ENCODE measurements at regions of chr10 and their contacts with region 1.

Region 1: GRCh38 chr10:109978481-109978880 is 29.3 kb upstream of the ADD3 start:
- DNase-seq: peak; percentile 30 to 68 (median 51)
- ATAC-seq: peak; percentile 87
- H3K4me3 ChIP-seq: no peak overlapping the region
- H3K4me3 Mint-ChIP-seq: no peak overlapping the region
- H3K27ac ChIP-seq: no peak overlapping the region
- H3K27ac Mint-ChIP-seq: peak overlapping the region in 3 of 9 donors; percentile 25 to 44 (median 41)
- H3K4me1 ChIP-seq: no peaks in the 10 kb centered on the region
- H3K4me1 Mint-ChIP-seq: peaks cover 5 to 38% (median 19%) of the 10 kb centered on the region in 7 donors
- H3K27me3 ChIP-seq: no peaks in the 10 kb centered on the region
- H3K27me3 Mint-ChIP-seq: peaks cover 0 to 12% (median 0%) of the 10 kb centered on the region in 5 donors

Region 2: DNA sequence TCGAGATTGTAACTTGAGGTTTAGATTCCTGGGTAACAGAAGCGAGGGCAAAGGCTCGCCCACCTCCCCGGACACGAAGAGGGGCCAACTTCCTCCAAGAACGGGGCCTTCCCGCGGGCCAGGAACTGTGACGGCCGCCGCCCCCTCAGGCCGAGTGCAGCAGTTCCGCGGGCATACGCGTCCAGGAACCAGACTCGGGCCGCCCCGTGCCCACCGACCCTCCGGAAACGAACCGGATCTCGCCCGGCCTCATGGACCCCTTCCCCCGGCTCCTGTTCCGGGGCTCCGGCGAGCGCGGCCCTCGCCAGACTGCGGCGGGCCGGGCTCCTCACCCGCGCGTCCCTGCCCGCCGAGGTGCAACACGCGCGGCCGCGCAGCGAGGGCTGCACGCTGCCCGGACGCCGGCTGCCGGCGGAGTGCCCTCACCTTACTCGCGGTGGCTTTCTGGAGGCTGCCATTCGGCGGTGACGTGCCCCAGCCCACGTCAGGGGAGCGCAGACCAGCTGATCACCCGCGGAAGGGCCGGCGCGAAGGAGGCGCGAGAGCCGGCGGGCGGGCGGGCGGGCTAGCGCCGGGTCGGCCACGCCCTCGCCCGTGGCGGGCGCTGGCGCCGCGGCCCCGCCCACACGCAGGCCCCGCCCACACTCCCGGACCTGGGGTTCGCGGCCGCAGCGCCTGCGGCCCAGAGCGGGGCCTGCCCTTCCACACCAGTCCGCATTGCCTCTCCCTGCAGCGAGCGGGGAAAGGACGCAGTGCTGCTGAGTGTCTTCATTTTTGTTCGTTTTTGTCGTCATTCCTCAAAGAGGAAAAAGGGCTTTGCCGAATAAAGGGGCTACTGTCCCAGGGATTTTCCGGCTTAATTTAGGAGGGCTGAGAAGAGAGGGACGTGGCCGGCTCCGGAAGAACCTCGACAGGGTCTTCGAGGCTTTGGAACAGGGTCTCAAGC is 55.2 kb before region 1 on chr10 and contains the start of gene XPNPEP1:
- CTCF ChIA-PET with region 1: no interaction called
- POLR2A ChIA-PET with region 1: interaction called, 3 read pairs
- intact Hi-C with region 1: loop called in 1 of 2 experiments (anchors 5 kb)
- DNase-seq: peak; percentile 55 to 90 (median 66)
- ATAC-seq: peak; percentile 98
- H3K4me3 ChIP-seq: peak within 1 kb of the TSS; percentile 67
- H3K4me3 Mint-ChIP-seq: peak within 1 kb of the TSS; percentile 78 to 94 (median 90)
- H3K27ac ChIP-seq: peak within 1 kb of the TSS; percentile 83
- H3K27ac Mint-ChIP-seq: peak within 1 kb of the TSS; percentile 75 to 95 (median 89)
- H3K4me1 ChIP-seq: peaks cover 30 to 39% of the 10 kb centered on the region in 2 donors
- H3K4me1 Mint-ChIP-seq: peaks cover 36 to 58% (median 54%) of the 10 kb centered on the region in 7 donors
- H3K27me3 ChIP-seq: no peaks in the 10 kb centered on the region
- H3K27me3 Mint-ChIP-seq: peaks cover 0 to 16% (median 0%) of the 10 kb centered on the region in 5 donors
- total RNA-seq, gene XPNPEP1: 44.1 to 100 (median 60.7) TPM

Region 3: GRCh38 chr10:110036640-110037039 is 58.2 kb after region 1 on chr10:
- CTCF ChIA-PET with region 1: no interaction called
- POLR2A ChIA-PET with region 1: no interaction called
- intact Hi-C with region 1: loop called in 1 of 2 experiments (anchors 2 kb)
- DNase-seq: no peak
- ATAC-seq: no peak
- H3K4me3 ChIP-seq: no peak overlapping the region
- H3K4me3 Mint-ChIP-seq: peak overlapping the region in 6 of 10 donors; percentile 6 to 66 (median 30)
- H3K27ac ChIP-seq: no peak overlapping the region
- H3K27ac Mint-ChIP-seq: peak overlapping the region in 7 of 9 donors; percentile 42 to 91 (median 69)
- H3K4me1 ChIP-seq: peaks cover 25 to 69% of the 10 kb centered on the region in 2 donors
- H3K4me1 Mint-ChIP-seq: peaks cover 61 to 98% (median 92%) of the 10 kb centered on the region in 7 donors
- H3K27me3 ChIP-seq: no peaks in the 10 kb centered on the region
- H3K27me3 Mint-ChIP-seq: no peaks in the 10 kb centered on the region

Region 4: DNA sequence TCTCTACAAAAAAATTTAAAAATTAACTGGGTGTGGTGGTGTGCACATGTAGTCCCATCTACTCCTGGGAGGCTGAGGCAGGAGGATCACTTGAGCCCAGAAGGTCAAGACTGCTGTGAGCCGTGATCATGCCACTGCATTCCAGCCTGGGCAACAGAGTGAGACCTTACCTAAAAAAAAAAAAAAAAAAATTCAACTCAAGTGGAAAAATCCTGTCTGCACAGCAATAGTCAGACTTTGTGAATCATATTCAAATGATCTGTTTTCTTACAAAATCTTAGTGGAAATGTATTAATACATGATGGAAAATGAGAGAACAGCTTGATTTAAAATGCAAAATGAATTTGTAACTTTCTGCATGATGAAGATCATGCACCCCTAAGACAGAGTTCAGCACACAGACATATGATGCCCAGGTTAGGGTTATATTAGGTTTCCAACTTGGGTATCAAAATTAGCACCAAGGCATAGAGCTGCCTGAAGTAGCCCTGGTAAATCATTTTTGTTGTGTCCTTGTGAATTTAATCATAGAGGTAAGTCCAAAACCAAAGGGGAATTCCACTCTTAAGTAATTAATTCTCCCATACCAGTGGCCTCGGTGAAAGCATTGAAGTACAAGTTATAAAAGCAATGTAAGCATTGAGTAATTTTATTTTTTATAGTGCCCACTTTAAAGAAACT is 123.1 kb after region 1 on chr10:
- CTCF ChIA-PET with region 1: interaction called, 4 read pairs
- POLR2A ChIA-PET with region 1: interaction called, 3 read pairs
- intact Hi-C with region 1: loop called (anchors 5 kb)
- DNase-seq: no peak
- ATAC-seq: no peak
- H3K4me3 ChIP-seq: no peak overlapping the region
- H3K4me3 Mint-ChIP-seq: no peak overlapping the region
- H3K27ac ChIP-seq: no peak overlapping the region
- H3K27ac Mint-ChIP-seq: peak overlapping the region in 5 of 9 donors; percentile 12 to 84 (median 78)
- H3K4me1 ChIP-seq: peaks cover 0 to 8% of the 10 kb centered on the region in 2 donors
- H3K4me1 Mint-ChIP-seq: peaks cover 28 to 85% (median 68%) of the 10 kb centered on the region in 7 donors
- H3K27me3 ChIP-seq: no peaks in the 10 kb centered on the region
- H3K27me3 Mint-ChIP-seq: no peaks in the 10 kb centered on the region

Region 5: GRCh38 chr10:110137142-110137545 is 158.7 kb after region 1 on chr10:
- CTCF ChIA-PET with region 1: no interaction called
- POLR2A ChIA-PET with region 1: no interaction called
- intact Hi-C with region 1: loop called in 1 of 2 experiments (anchors 1 kb)
- DNase-seq: peak in 7 of 9 donors; percentile 48 to 67 (median 64)
- ATAC-seq: peak; percentile 85
- H3K4me3 ChIP-seq: no peak overlapping the region
- H3K4me3 Mint-ChIP-seq: peak overlapping the region in 1 of 10 donors; percentile 19
- H3K27ac ChIP-seq: peak overlapping the region; percentile 4
- H3K27ac Mint-ChIP-seq: peak overlapping the region; percentile 2 to 83 (median 45)
- H3K4me1 ChIP-seq: peaks cover 14% of the 10 kb centered on the region in 2 donors
- H3K4me1 Mint-ChIP-seq: peaks cover 13 to 38% (median 29%) of the 10 kb centered on the region in 7 donors
- H3K27me3 ChIP-seq: no peaks in the 10 kb centered on the region
- H3K27me3 Mint-ChIP-seq: no peaks in the 10 kb centered on the region